Endothelial cell of umbilical vein (primary cell): ENCODE measurements at regions of chr6 and their contacts with region 1.

Region 1: DNA sequence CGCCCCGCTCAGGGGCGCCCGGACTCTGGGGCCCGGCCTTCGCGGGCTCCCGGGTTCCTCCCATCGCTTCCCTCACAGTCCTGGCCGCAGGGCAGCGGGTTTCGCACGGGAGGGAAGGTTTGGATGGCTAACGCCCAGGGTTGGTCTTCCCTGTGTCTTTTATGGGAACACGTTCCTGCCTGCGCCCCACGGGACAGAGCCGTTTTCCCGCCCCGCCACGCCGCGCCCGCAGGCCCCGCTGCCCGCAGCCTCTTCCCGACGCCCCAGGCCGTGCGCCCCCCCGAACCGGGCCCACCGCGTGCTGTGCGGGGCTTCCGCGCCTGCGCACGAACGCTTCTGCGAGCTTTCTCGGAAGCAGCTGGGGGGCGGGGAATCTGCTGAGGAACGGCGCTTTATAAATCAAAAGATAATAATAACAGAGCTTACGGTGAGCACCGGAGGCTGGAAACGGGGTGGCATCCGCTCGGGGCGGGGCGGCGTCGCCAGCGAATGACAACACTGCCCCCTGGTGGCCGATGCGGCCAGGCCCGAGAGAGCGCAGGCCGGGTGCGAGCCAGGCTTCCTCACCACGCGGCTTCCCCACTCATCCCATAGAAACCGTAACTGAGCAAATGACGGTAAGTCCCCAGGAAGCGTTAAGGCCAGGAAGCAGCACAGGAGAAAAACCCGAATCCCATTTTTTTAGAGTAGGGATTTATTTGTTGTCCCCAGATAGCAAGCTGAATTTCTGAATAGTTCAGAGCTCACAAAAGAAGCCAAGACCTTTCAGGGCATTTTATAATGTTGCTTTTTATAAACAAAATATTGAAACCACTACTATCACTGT is 116.4 kb downstream of the MYLK4 start:
- DNase-seq: peak; percentile 93
- H3K4me3 ChIP-seq: peak overlapping the region in 2 of 3 experiments; percentile 13 to 15
- H3K27ac ChIP-seq: peak overlapping the region; percentile 44
- H3K4me1 ChIP-seq: peaks cover 15% of the 10 kb centered on the region
- H3K27me3 ChIP-seq: no peaks in the 10 kb centered on the region
- CTCF ChIP-seq: peak; percentile 98 to 99
- POLR2A ChIP-seq: no peak

Region 2: GRCh38 chr6:1609648-1610496 is 1024.5 kb before region 1 on chr6 and contains the start of gene FOXC1:
- CTCF ChIA-PET with region 1: interaction called, 22 read pairs
- POLR2A ChIA-PET with region 1: no interaction called
- dilution Hi-C with region 1: no loop called
- intact Hi-C with region 1: loop called (anchors 2 kb)
- DNase-seq: peak; percentile 97
- H3K4me3 ChIP-seq: peak within 1 kb of the TSS; percentile 69 to 89 (median 87)
- H3K27ac ChIP-seq: peak within 1 kb of the TSS; percentile 70
- H3K4me1 ChIP-seq: no peaks in the 10 kb centered on the region
- H3K27me3 ChIP-seq: peaks cover 10 to 13% of the 10 kb centered on the region in 2 experiments
- CTCF ChIP-seq: no peak
- POLR2A ChIP-seq: peak; percentile 88
- total RNA-seq, gene FOXC1: 15.9 and 16.4 TPM in 2 replicates

Region 3: DNA sequence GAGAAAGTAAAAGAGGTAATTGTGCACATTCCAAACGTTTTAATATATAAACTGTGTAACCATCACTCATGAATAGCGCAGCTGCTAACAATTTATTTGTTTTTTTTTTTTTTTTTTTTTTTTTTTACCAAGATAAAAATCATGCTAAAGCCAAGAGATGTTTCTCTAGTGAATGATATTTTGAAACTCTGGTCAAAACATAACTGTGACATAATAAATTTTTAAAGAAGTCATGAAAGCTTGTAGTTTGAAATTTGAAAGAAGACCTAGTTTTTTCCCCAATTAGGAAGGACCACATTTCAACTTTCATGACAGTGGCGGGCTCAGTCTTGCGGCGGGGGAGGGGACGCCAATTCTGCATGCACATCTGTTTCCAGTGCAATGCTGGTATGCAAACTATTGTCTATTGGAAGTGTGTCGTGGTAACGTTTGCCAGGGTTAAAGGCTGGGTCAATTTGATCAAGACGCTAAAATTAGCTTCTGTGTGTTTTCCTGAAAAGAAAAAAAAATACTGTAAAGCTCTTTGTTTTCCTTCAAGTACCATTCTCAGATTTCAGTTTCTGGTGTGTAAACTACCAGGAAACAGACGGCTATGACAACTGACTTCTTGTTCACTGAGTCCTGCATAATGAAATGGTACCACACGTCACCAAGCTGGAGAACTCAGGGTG is 812.7 kb before region 1 on chr6:
- CTCF ChIA-PET with region 1: interaction called, 4 read pairs
- POLR2A ChIA-PET with region 1: no interaction called
- dilution Hi-C with region 1: no loop called
- intact Hi-C with region 1: loop called (anchors 5 kb)
- DNase-seq: peak; percentile 89
- H3K4me3 ChIP-seq: no peak overlapping the region
- H3K27ac ChIP-seq: peak overlapping the region; percentile 65
- H3K4me1 ChIP-seq: peaks cover 37% of the 10 kb centered on the region
- H3K27me3 ChIP-seq: no peaks in the 10 kb centered on the region
- CTCF ChIP-seq: no peak
- POLR2A ChIP-seq: no peak

Region 4: DNA sequence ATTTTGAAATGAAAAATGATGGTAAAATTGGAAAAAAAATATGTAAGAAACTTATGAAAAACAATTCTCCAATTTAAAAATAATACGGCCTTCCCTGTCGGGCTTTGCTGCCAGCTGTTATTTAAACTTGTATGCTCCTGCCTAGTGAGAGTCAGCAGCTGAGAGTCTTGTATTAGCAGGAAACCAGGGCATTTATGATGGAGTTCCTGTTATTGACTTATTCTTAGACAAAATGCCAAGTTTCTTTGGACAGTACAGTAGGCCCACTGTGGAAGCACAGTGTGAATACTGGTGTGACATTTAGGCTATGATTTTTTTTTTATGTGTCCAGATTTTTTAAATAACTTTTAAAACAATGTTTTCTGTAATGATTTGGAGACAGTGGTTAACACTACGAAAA is 431.1 kb before region 1 on chr6:
- CTCF ChIA-PET with region 1: interaction called, 24 read pairs
- POLR2A ChIA-PET with region 1: no interaction called
- dilution Hi-C with region 1: no loop called
- intact Hi-C with region 1: loop called (anchors 1 kb)
- DNase-seq: peak; percentile 94
- H3K4me3 ChIP-seq: no peak overlapping the region
- H3K27ac ChIP-seq: peak overlapping the region; percentile 72
- H3K4me1 ChIP-seq: peaks cover 17% of the 10 kb centered on the region
- H3K27me3 ChIP-seq: no peaks in the 10 kb centered on the region
- CTCF ChIP-seq: no peak
- POLR2A ChIP-seq: no peak

Region 5: DNA sequence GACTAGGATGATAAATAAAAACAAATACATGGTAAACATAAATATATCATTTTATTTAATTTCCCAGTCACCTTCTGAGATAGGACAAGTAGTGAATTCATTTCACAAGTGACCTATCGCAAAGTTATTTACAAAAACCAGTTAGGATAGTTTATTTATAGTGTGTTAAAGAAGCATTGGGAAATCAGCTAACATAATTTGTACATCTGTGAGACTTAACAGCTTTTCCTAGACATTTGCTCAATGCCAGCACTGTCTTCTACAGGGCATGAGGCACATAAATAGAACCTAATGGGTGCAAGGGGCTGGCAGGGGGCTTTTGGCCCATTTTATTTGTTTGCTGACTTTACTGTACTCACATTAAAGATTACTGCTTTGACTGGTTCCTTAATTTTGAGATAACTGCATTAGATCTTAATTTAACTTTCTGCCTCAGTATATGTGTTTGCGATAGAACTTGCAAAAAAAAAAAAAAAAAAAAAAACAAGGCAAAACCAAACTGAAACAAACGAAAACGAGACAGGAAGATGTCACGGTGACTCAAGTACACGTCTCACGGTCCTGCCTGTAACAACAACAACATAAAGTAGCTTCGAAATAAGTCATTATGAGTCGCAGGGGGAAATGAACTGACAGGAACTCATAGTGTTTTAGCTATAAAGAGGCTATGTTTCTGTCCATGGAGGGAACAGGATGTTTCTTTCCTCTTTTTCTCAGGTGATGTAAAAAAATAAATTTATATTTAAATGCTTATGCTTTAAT is 255.3 kb before region 1 on chr6:
- CTCF ChIA-PET with region 1: interaction called, 3 read pairs
- POLR2A ChIA-PET with region 1: no interaction called
- dilution Hi-C with region 1: no loop called
- intact Hi-C with region 1: loop called (anchors 1 kb)
- DNase-seq: peak; percentile 75
- H3K4me3 ChIP-seq: no peak overlapping the region
- H3K27ac ChIP-seq: peak overlapping the region; percentile 81
- H3K4me1 ChIP-seq: peaks cover 15% of the 10 kb centered on the region
- H3K27me3 ChIP-seq: no peaks in the 10 kb centered on the region
- CTCF ChIP-seq: no peak
- POLR2A ChIP-seq: no peak

Region 6: GRCh38 chr6:2611090-2611489 is 23.3 kb before region 1 on chr6:
- CTCF ChIA-PET with region 1: interaction called, 13 read pairs
- POLR2A ChIA-PET with region 1: no interaction called
- dilution Hi-C with region 1: no loop called
- intact Hi-C with region 1: no loop called
- DNase-seq: peak; percentile 26
- H3K4me3 ChIP-seq: no peak overlapping the region
- H3K27ac ChIP-seq: no peak overlapping the region
- H3K4me1 ChIP-seq: peaks cover 8% of the 10 kb centered on the region
- H3K27me3 ChIP-seq: no peaks in the 10 kb centered on the region
- CTCF ChIP-seq: no peak
- POLR2A ChIP-seq: no peak